Activated naive CD4-positive, alpha-beta T cell treated with anti-CD3 and anti-CD28 coated beads, Interleukin-2, amount 10 ng/mL, durations not matched to agents 7 days and 5 days (primary cell): ENCODE measurements at regions of chr1 and their contacts with region 1.

Region 1: GRCh38 chr1:91511386-91511785 is 10.7 kb downstream of the CDC7 start:
- DNase-seq: no peak
- H3K4me3 Mint-ChIP-seq: no peak overlapping the region
- H3K27ac Mint-ChIP-seq: no peak overlapping the region
- H3K4me1 Mint-ChIP-seq: peaks cover 10% of the 10 kb centered on the region
- H3K27me3 Mint-ChIP-seq: no peaks in the 10 kb centered on the region

Region 2: GRCh38 chr1:91523482-91523881 is 12.1 kb after region 1 on chr1:
- CTCF ChIA-PET with region 1: interaction called, 14 read pairs
- DNase-seq: no peak
- H3K4me3 Mint-ChIP-seq: no peak overlapping the region
- H3K27ac Mint-ChIP-seq: no peak overlapping the region
- H3K4me1 Mint-ChIP-seq: peaks cover 25% of the 10 kb centered on the region
- H3K27me3 Mint-ChIP-seq: no peaks in the 10 kb centered on the region

Region 3: DNA sequence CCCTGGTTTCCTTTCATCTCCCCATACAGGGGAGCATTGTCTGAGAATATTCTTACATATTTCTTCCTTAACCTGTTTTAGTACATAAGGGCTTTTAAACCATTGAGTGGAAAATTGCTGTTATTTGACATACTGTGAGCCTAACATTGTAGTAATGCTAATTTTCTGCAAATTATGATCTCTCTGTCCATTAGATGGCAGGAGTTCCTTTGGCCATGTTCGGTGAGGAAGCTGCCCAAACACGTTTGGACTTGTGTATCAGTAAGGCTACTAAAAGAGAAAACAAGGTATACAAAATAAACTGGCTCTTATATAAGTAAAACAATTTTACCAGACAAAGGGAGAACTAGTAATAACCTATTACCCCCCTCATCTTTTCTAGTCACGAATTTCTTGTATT is 18.5 kb after region 1 on chr1:
- CTCF ChIA-PET with region 1: interaction called, 14 read pairs
- DNase-seq: no peak
- H3K4me3 Mint-ChIP-seq: no peak overlapping the region
- H3K27ac Mint-ChIP-seq: no peak overlapping the region
- H3K4me1 Mint-ChIP-seq: peaks cover 23% of the 10 kb centered on the region
- H3K27me3 Mint-ChIP-seq: no peaks in the 10 kb centered on the region

Region 4: DNA sequence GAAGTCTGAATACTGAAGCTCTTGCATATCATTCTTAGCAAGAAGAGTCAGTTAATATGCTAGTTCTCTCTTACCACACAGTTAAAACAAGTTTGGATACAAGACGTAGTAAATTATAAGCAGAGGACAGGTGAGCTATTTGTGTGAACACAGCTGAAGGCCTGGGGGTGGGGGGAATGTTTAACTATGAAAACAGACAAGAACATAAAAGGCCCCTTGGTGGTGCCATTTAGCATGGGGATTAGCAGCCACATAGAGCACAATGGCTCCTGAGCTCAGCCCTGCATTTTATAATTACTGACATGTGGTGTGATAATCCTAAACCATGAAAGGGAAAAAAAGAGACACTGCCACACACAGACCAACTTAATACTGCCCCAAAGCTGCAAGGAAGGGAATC is 279.7 kb after region 1 on chr1:
- CTCF ChIA-PET with region 1: interaction called, 10 read pairs
- DNase-seq: no peak
- H3K4me3 Mint-ChIP-seq: no peak overlapping the region
- H3K27ac Mint-ChIP-seq: peak overlapping the region; percentile 47
- H3K4me1 Mint-ChIP-seq: peaks cover 42% of the 10 kb centered on the region
- H3K27me3 Mint-ChIP-seq: peaks cover 4% of the 10 kb centered on the region

Region 5: GRCh38 chr1:91885716-91886506 is 374.5 kb after region 1 on chr1 and contains the start of gene TGFBR3:
- CTCF ChIA-PET with region 1: interaction called, 45 read pairs
- DNase-seq: peak; percentile 81
- H3K4me3 Mint-ChIP-seq: peak within 1 kb of the TSS; percentile 86
- H3K27ac Mint-ChIP-seq: peak within 1 kb of the TSS; percentile 29
- H3K4me1 Mint-ChIP-seq: peaks cover 34% of the 10 kb centered on the region
- H3K27me3 Mint-ChIP-seq: peaks cover 21% of the 10 kb centered on the region

Region 6: DNA sequence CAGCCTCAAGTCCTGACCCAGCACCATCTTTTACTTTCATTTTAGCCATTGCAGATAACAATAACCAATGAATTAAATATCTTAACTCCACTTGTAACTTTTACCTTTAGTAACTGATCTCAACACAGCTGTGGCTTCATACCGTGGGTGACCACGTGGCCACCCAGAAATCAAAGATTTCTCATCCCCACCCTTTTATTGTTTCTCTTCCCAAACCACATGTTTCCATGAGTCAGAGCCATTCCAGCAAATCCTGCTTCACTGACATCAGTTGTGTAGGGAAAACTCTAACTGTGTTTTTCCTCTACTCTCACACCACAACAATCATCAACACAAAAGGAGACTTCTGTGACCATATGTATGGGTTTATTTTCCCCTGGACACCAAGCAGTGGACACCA is 412.8 kb after region 1 on chr1:
- CTCF ChIA-PET with region 1: interaction called, 70 read pairs
- DNase-seq: no peak
- H3K4me3 Mint-ChIP-seq: no peak overlapping the region
- H3K27ac Mint-ChIP-seq: no peak overlapping the region
- H3K4me1 Mint-ChIP-seq: peaks cover 12% of the 10 kb centered on the region
- H3K27me3 Mint-ChIP-seq: peaks cover 3% of the 10 kb centered on the region